ENCODE measurements at regions of chr6 and their contacts with region 1.

Region 1: GRCh38 chr6:131419702-131420101 is 153.3 kb upstream of the ARG1 start:
- DNase-seq: no peak
- ATAC-seq: no peak
- H3K4me3 ChIP-seq: no peak overlapping the region
- H3K27ac ChIP-seq: no peak overlapping the region
- H3K4me1 ChIP-seq: no peaks in the 10 kb centered on the region
- H3K27me3 ChIP-seq: no peaks in the 10 kb centered on the region; a peak in 1 of 5 replicates
- CTCF ChIP-seq: no peak
- EP300 ChIP-seq: no peak
- POLR2A ChIP-seq: no peak
- RAD21 ChIP-seq: no peak

Region 2: DNA sequence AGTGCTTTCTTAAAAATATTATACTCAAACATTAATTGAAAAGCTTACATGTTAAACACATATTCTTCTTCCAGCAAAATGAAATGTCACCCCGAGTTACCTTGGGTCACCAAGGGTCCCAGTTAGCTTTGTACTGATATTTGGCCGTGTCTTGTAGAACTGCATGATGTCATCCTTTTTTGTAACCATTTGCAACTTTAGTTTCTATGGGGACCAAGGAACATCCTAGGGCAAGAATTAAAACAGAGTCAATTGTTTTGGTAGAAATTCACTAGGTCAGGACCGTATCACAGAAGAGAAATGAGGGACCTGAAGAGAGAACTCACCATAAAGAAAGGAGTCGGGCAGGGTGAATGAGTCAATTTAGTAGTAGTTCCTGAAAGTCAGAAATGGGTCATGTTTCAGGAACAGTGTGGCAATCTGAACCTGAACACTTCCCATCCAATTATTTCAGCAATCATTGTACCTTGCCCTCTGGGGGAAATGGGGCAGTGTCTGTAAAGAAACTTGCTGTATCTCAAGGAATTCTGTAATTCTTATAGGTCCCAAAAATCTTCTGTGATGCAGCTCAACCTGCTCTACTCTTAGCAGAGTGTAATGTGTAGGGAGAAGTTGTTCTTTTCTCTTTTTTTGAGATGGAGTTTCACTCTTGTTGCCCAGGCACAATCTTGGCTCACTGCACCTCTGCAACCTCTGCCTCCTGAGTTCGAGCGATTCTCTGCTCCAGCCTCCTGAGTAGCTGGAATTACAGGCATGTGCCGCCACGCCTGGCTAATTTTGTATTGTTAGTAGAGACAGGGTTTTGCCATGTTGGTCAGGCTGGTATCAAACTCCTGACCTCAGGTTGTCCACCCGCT is 289.8 kb before region 1 on chr6:
- CTCF ChIA-PET with region 1: no interaction called
- POLR2A ChIA-PET with region 1: no interaction called
- in situ Hi-C with region 1: no loop called
- intact Hi-C with region 1: no loop called
- DNase-seq: no peak
- ATAC-seq: no peak; the same call in 2 of the 3 replicates
- H3K4me3 ChIP-seq: no peak overlapping the region
- H3K27ac ChIP-seq: no peak overlapping the region
- H3K4me1 ChIP-seq: no peaks in the 10 kb centered on the region
- H3K27me3 ChIP-seq: peaks cover 1 to 4% of the 10 kb centered on the region in 2 experiments; a peak in 2 of 5 replicates
- CTCF ChIP-seq: no peak
- EP300 ChIP-seq: no peak
- POLR2A ChIP-seq: no peak
- RAD21 ChIP-seq: no peak

Region 3: GRCh38 chr6:131400054-131400781 is 19.5 kb before region 1 on chr6:
- CTCF ChIA-PET with region 1: no interaction called
- POLR2A ChIA-PET with region 1: no interaction called
- in situ Hi-C with region 1: no loop called
- intact Hi-C with region 1: loop called (anchors 2 kb)
- DNase-seq: peak in 3 of 4 experiments; percentile 10 to 15 (median 12)
- ATAC-seq: peak; percentile 33; the same call in 1 of the 3 replicates
- H3K4me3 ChIP-seq: no peak overlapping the region
- H3K27ac ChIP-seq: no peak overlapping the region
- H3K4me1 ChIP-seq: no peaks in the 10 kb centered on the region
- H3K27me3 ChIP-seq: no peaks in the 10 kb centered on the region
- CTCF ChIP-seq: no peak
- EP300 ChIP-seq: no peak
- POLR2A ChIP-seq: no peak
- RAD21 ChIP-seq: no peak

Region 4: DNA sequence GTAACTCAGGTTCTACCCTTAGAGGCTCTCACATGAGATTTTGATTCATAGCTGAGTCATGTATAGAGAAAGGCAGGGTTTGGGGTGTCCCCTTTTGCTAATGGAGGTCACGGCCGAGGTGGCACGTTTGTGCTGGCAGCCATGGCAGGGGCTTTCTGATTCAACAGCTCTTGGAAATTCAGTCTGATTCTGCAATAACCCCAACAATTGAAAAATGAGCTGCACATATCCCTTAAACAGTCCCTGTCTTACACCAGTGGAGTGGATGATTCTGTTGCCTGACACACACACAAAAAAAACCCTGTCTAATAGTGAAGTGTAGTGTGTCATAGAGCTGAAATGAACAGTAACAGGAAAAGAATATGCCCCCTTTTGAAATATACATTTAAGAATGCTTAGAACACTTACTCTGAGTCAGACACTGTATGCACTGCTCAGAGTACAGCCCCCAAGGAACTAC is 112.9 kb after region 1 on chr6:
- CTCF ChIA-PET with region 1: no interaction called
- POLR2A ChIA-PET with region 1: no interaction called
- in situ Hi-C with region 1: no loop called
- intact Hi-C with region 1: no loop called
- DNase-seq: no peak
- ATAC-seq: no peak
- H3K4me3 ChIP-seq: no peak overlapping the region
- H3K27ac ChIP-seq: no peak overlapping the region
- H3K4me1 ChIP-seq: no peaks in the 10 kb centered on the region
- H3K27me3 ChIP-seq: no peaks in the 10 kb centered on the region; a peak in 1 of 5 replicates
- CTCF ChIP-seq: no peak
- EP300 ChIP-seq: no peak
- POLR2A ChIP-seq: no peak
- RAD21 ChIP-seq: no peak

Region 5: DNA sequence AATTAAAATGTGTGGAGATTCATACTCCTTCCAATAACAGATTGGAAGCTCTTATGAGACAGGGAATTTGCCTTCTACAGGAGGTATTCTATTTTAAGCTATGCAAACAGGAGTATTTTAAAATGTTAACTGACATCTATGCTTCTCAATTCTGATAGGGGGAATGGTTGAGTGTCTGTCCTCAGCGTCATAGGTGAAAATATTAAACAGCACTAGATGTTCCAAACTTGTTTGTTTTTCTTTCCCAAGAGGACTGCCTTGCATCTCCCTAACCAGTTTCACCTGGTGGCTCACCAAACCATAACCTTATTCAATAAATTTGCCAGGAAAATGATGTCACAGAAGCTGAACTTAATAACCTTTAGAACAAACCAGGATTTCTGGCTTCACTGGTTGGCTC is 128.7 kb after region 1 on chr6:
- CTCF ChIA-PET with region 1: no interaction called
- POLR2A ChIA-PET with region 1: no interaction called
- in situ Hi-C with region 1: no loop called
- intact Hi-C with region 1: no loop called
- DNase-seq: no peak
- ATAC-seq: no peak
- H3K4me3 ChIP-seq: no peak overlapping the region
- H3K27ac ChIP-seq: no peak overlapping the region
- H3K4me1 ChIP-seq: no peaks in the 10 kb centered on the region
- H3K27me3 ChIP-seq: peaks cover 0 to 21% of the 10 kb centered on the region in 2 experiments; a peak in 3 of 5 replicates
- CTCF ChIP-seq: no peak
- EP300 ChIP-seq: no peak
- POLR2A ChIP-seq: no peak
- RAD21 ChIP-seq: no peak

Measured in K562 (cell line).